ENCODE measurements at regions of chr7 and their contacts with region 1.

Region 1: GRCh38 chr7:74569501-74570075 is 87.9 kb upstream of the GTF2I start:
- ATAC-seq: peak in 4 of 8 experiments; percentile 12 to 27 (median 22)
- H3K4me3 ChIP-seq: no peak overlapping the region
- H3K27ac ChIP-seq: peak overlapping the region in 1 of 2 donors; percentile 55
- H3K4me1 ChIP-seq: peaks cover 5 to 7% of the 10 kb centered on the region in 2 donors

Region 2: GRCh38 chr7:73718905-73719805 is 850.4 kb before region 1 on chr7 and contains the start of gene STX1A:
- in situ Hi-C with region 1: no loop called
- ATAC-seq: peak; percentile 16 to 84 (median 52)
- H3K4me3 ChIP-seq: peak within 1 kb of the TSS; percentile 65 to 100 (median 98)
- H3K27ac ChIP-seq: peak within 1 kb of the TSS; percentile 9 to 33
- H3K4me1 ChIP-seq: peaks cover 21 to 32% of the 10 kb centered on the region in 2 donors
- total RNA-seq, gene STX1A: 7.1 to 50.5 (median 17.0) TPM

Region 3: DNA sequence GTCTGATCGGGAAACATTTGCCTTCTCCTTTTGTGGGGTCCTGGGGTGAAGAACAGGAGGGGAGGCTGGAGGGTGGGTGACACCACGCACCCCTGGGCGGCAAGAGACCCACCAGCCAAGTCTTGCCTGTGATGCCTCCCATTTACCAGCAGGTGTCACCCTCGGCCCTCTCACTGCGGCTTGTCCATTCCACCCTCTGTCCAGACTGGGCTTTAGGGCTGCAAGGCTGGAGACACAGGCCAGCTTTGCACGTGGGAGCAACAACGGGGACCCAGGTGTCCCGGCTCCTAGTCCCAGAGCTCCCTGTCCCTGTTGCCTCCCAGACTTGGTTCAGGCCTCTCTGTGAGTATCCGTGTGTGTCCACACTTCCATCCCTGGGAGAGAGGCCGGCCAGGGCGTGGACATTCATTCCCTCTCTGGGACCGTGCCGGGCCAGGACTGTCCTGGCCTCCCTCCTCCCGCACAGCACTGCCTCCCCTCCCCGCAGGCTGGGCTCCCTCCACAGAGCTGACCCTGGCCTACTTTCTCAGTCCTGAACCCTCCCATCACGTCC is 152.1 kb before region 1 on chr7:
- in situ Hi-C with region 1: loop called in 2 of 9 experiments (anchors 10 to 25 kb)
- ATAC-seq: peak; percentile 90 to 98 (median 94)
- H3K4me3 ChIP-seq: no peak overlapping the region
- H3K27ac ChIP-seq: no peak overlapping the region
- H3K4me1 ChIP-seq: no peaks in the 10 kb centered on the region

Region 4: DNA sequence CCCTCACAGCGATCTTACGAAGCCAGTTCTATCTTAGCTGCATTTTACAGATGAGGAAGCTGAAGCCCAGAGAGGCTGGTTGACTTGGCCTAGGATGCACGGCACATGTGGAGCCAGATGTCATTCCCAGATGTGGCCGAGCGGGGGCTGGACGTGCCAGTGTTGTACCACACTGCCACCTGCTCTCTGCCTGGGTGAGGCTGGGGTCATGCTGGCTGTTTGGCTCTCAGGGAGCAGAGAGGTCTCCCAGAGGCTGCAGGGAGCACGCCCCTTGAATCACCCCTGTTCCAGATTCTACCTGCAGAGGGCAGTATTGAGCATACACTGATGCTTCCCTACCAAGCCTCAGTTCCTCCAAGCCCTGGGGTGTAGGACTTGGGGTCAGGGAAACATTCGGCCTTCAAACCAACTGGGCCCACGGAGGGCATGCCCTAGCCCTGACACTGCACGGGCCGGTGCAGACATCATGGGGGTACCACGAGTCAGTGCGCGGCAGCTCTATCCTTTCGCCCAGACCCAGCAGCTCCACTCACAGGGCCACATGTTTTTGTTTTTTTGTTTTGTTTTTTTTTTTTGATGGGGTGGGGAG is 119.7 kb before region 1 on chr7:
- in situ Hi-C with region 1: loop called in 2 of 9 experiments (anchors 25 kb)
- ATAC-seq: peak in 3 of 8 experiments; percentile 12 to 35 (median 23)
- H3K4me3 ChIP-seq: no peak overlapping the region
- H3K27ac ChIP-seq: no peak overlapping the region
- H3K4me1 ChIP-seq: peaks cover 7 to 9% of the 10 kb centered on the region in 2 donors

Measured in motor neuron (in vitro differentiated cells).